CD4-positive, alpha-beta T cell (primary cell): ENCODE measurements at regions of chr6 and their contacts with region 1.

Region 1: GRCh38 chr6:117547688-117548621 is 54.4 kb downstream of the GOPC start:
- DNase-seq: peak; percentile 15 to 75 (median 36)
- ATAC-seq: peak; percentile 50
- H3K4me3 ChIP-seq: peak overlapping the region; percentile 75
- H3K4me3 Mint-ChIP-seq: peak overlapping the region; percentile 82
- H3K27ac ChIP-seq: peak overlapping the region; percentile 14 to 49
- H3K27ac Mint-ChIP-seq: peak overlapping the region; percentile 81
- H3K4me1 ChIP-seq: peaks cover 36% of the 10 kb centered on the region
- H3K4me1 Mint-ChIP-seq: peaks cover 43% of the 10 kb centered on the region
- H3K27me3 ChIP-seq: no peaks in the 10 kb centered on the region
- H3K27me3 Mint-ChIP-seq: no peaks in the 10 kb centered on the region
- CTCF ChIP-seq: no peak

Region 2: GRCh38 chr6:117449549-117450439 is 98.2 kb before region 1 on chr6:
- CTCF ChIA-PET with region 1: interaction called, 13 read pairs
- POLR2A ChIA-PET with region 1: interaction called, 6 read pairs
- intact Hi-C with region 1: no loop called
- DNase-seq: peak; percentile 13 to 82 (median 50)
- ATAC-seq: peak; percentile 52
- H3K4me3 ChIP-seq: no peak overlapping the region
- H3K4me3 Mint-ChIP-seq: no peak overlapping the region
- H3K27ac ChIP-seq: no peak overlapping the region
- H3K27ac Mint-ChIP-seq: no peak overlapping the region
- H3K4me1 ChIP-seq: no peaks in the 10 kb centered on the region
- H3K4me1 Mint-ChIP-seq: no peaks in the 10 kb centered on the region
- H3K27me3 ChIP-seq: peaks cover 0 to 28% of the 10 kb centered on the region in 2 experiments
- H3K27me3 Mint-ChIP-seq: peaks cover 54% of the 10 kb centered on the region
- CTCF ChIP-seq: peak; percentile 78

Region 3: GRCh38 chr6:117482240-117483003 is 65.5 kb before region 1 on chr6 and contains the start of gene DCBLD1:
- CTCF ChIA-PET with region 1: interaction called, 4 read pairs
- POLR2A ChIA-PET with region 1: interaction called, 15 read pairs
- intact Hi-C with region 1: loop called in 1 of 2 experiments (anchors 5 kb)
- DNase-seq: peak in 13 of 14 experiments; percentile 12 to 80 (median 34)
- ATAC-seq: peak; percentile 59
- H3K4me3 ChIP-seq: peak within 1 kb of the TSS; percentile 81
- H3K4me3 Mint-ChIP-seq: peak within 1 kb of the TSS; percentile 89
- H3K27ac ChIP-seq: no peak within 1 kb of the TSS
- H3K27ac Mint-ChIP-seq: no peak within 1 kb of the TSS
- H3K4me1 ChIP-seq: peaks cover 23% of the 10 kb centered on the region
- H3K4me1 Mint-ChIP-seq: peaks cover 19% of the 10 kb centered on the region
- H3K27me3 ChIP-seq: peaks cover 17 to 32% of the 10 kb centered on the region in 2 experiments
- H3K27me3 Mint-ChIP-seq: peaks cover 79% of the 10 kb centered on the region
- CTCF ChIP-seq: no peak
- total RNA-seq, gene DCBLD1: 1.3 to 1.4 TPM